ENCODE measurements at regions of chr1 and their contacts with region 1.

Region 1: DNA sequence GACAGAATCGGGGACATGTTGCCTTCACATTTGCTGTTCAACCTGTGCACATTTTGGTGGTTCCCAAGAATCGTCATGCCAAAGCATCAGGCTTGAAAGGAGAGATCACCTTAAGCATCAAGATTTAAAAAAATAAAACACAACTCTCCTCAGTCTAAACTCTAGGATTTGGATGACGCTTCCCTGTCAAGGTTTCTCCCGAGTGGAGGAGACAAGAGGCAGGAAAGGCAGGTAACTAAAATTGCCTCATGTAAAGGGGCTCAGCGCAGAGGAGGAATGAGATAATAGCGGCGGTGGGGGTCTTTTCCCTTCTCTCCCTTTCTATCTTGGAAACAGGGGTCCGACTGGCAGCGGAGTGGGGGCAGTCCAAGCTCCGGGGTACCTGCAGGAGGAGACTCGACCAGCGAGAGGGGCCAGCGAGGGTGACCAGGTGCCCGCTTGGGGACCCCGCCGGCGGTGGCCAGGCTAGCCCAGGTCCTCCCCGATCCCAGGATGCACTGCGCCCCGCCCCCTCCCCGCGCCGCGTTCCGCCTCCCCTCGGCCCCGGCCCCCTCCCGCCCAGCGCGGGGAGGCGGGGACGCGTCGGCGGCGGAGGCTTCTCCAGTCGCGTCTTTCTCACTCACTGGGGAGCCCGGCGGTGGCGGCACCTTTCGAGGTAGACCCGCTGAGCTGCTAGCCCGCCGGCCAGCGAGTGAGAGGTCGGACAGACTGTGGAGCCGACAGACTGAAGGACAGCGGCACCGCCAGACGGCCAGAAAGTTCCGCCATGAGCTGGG is at the start of gene FNBP1L:
- DNase-seq: peak; percentile 76 to 86
- H3K4me3 ChIP-seq: peak within 1 kb of the TSS; percentile 90
- H3K27ac ChIP-seq: peak within 1 kb of the TSS; percentile 44
- H3K4me1 ChIP-seq: peaks cover 28% of the 10 kb centered on the region
- H3K27me3 ChIP-seq: no peaks in the 10 kb centered on the region
- CTCF ChIP-seq: no peak
- total RNA-seq, gene FNBP1L: 34.1 and 34.3 TPM in 2 replicates

Region 2: GRCh38 chr1:93275634-93276295 is 171.9 kb before region 1 on chr1:
- CTCF ChIA-PET with region 1: no interaction called
- POLR2A ChIA-PET with region 1: no interaction called
- intact Hi-C with region 1: no loop called
- DNase-seq: no peak
- H3K4me3 ChIP-seq: no peak overlapping the region
- H3K27ac ChIP-seq: no peak overlapping the region
- H3K4me1 ChIP-seq: no peaks in the 10 kb centered on the region
- H3K27me3 ChIP-seq: no peaks in the 10 kb centered on the region
- CTCF ChIP-seq: no peak

Region 3: GRCh38 chr1:93345633-93346420 is 101.9 kb before region 1 on chr1 and contains the start of gene DR1:
- CTCF ChIA-PET with region 1: no interaction called
- POLR2A ChIA-PET with region 1: no interaction called
- intact Hi-C with region 1: loop called (anchors 5 kb)
- DNase-seq: peak; percentile 84 to 94
- H3K4me3 ChIP-seq: peak within 1 kb of the TSS; percentile 86
- H3K27ac ChIP-seq: peak within 1 kb of the TSS; percentile 86
- H3K4me1 ChIP-seq: peaks cover 35% of the 10 kb centered on the region
- H3K27me3 ChIP-seq: no peaks in the 10 kb centered on the region
- CTCF ChIP-seq: no peak
- total RNA-seq, gene DR1: 33.6 and 37.8 TPM in 2 replicates

Region 4: DNA sequence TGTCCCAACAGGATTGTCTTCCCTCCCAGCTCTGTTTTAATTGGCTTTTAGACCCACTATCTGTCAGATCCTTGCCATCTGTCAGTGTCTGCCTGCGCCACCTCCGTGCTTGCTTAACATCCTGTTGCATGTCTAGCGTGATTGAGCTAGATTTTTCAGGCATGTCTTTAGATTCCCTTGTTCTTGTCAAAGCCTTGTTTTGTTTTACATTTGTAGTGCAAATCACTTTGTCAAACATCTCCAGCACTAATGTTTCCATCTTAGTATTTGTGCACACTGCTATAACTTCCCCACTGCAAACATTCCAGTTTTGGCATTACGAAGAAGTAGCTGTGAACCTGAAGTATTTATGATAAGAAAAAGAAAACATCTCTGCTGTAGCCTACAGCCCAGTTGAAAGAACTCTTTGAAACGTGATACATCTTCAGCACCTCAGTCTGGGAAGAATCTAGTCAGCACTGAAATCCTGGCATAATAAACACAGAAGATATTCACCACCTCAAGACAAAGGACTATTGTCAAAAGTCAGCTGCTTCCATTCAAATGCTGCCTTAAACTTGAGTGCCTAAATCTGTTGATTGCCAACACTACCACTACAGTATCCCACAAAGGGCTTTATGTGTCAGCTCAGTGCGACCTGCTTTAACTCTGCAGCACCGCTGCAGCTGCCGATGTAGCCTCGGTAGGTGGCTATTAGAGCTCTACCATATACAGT is 105.2 kb after region 1 on chr1:
- CTCF ChIA-PET with region 1: no interaction called
- POLR2A ChIA-PET with region 1: no interaction called
- intact Hi-C with region 1: loop called (anchors 10 kb)
- DNase-seq: no peak
- H3K4me3 ChIP-seq: no peak overlapping the region
- H3K27ac ChIP-seq: no peak overlapping the region
- H3K4me1 ChIP-seq: peaks cover 11% of the 10 kb centered on the region
- H3K27me3 ChIP-seq: no peaks in the 10 kb centered on the region
- CTCF ChIP-seq: no peak

Region 5: DNA sequence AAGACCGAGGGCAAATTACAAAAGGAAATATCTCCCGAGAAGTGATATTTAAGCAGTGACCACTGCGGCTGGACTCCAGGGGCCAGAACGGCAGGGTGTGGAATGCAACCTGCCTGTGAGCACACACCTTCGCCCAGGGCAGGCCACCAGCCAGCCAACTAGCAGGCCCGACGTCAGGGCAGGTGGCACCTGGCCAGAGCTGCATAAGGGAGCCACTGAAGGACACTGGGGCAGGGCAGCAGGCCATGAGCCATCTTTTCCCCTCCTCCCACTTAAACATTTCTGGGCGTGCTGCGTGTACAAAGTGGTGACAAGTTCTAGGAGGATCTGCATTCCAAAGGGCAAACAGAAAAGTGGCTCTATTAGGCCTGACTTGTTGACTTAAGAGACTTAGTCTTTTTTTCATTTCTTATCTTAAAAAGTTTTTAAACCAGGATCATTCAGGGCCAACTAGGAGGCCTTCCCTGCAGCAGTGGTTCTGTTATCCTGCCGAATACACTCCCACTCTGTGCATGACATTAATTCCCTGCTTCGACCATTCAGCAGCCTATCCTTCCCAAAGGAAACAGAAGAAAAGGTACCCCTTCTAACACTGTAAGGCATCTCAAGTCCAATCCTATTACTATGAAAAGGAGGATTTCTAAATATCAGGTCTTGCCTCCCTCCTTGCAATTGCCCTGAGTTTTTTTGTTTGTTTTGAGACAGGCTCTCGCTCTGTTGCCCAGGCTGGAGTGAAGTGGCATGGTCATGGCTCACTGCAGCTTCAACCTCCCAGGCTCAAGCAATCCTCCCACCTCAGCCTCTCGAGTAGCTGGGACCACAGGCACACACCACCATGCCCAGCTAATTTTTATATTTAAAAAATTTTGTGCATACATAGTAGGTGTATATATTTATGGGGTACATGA is 137.6 kb after region 1 on chr1:
- CTCF ChIA-PET with region 1: interaction called, 3 read pairs
- POLR2A ChIA-PET with region 1: no interaction called
- intact Hi-C with region 1: loop called (anchors 2 kb)
- DNase-seq: peak; percentile 99 to 100
- H3K4me3 ChIP-seq: peak overlapping the region; percentile 33; the same call in 1 of the 2 replicates
- H3K27ac ChIP-seq: peak overlapping the region; percentile 83
- H3K4me1 ChIP-seq: peaks cover 98% of the 10 kb centered on the region
- H3K27me3 ChIP-seq: no peaks in the 10 kb centered on the region
- CTCF ChIP-seq: no peak

Region 6: DNA sequence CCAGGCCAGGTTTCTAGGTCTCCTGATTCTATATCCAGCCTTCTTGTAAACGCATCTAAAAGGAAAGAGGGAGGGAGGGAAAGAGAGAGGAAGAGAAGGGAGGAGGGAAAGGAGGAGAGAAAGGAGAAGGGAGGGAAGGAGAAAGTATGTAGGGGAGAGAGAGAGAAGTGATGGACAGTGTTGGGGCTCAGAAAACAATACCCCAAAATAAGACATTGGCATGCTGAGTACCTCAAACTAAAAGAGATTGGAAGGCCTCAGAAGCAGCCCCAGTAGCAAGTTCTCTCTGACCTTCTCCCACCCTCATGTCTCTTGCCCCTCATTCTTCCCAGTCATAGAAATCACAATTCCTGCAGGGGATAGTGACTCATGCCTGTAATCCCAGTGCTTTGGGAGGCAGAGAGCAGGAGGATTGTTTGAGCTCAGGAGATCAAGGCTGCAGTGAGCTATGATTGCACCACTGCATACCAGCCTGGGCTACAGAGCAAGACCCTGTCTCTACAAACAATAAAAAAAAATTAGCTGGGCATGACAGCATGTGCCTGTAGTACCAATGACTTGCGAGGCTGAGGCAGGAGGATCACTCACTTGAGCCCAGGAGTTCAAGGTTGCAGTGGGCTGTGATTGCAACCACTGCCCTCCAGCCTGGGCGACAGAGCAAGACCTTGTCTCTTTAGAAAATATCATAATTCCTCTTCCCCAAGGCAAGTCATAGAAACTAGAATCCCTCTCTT is 380.1 kb after region 1 on chr1:
- CTCF ChIA-PET with region 1: interaction called, 5 read pairs
- POLR2A ChIA-PET with region 1: no interaction called
- intact Hi-C with region 1: loop called (anchors 5 kb)
- DNase-seq: peak in 1 of 2 experiments; percentile 90
- H3K4me3 ChIP-seq: peak overlapping the region; percentile 10; the same call in 1 of the 2 replicates
- H3K27ac ChIP-seq: peak overlapping the region; percentile 72
- H3K4me1 ChIP-seq: peaks cover 44% of the 10 kb centered on the region
- H3K27me3 ChIP-seq: no peaks in the 10 kb centered on the region
- CTCF ChIP-seq: no peak